Activated CD4-positive, alpha-beta T cell treated with anti-CD3 and anti-CD28 coated beads for 36 hours (primary cell): ENCODE measurements at regions of chr13 and their contacts with region 1.

Region 1: DNA sequence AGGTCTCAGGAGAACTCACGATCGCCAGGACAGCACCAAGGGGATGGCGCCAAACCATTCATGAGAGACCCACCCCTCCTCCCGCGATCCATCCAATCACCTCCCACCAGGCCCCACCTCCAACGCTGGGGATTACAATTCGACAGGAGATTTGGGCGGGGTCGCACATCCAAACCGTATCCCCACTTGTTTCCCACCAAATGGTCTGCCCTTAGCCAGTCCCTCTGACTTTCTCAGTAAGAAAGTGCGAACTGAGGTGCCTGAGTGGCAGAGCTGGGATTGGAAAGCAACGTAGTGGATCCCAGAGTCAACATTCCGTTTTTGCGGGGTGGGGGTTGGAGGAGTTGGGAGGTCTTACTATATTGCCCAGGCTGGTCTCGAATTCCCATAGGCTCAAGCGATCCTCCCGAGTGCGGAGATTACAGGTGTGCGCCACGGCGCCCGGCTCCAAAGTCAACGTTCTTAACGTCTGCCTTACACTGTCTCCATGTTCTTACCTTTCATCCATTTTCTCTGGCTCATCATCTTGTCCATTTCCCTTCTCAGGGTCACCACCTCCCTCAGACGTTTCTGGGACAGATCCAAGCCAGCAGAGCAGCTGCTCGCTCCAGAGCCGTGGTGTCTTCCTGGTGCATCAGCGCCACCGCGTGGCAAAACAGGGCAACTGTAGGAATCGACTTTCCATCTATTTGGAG is 102.7 kb upstream of the ABCC4 start:
- DNase-seq: peak; percentile 87
- ATAC-seq: peak; percentile 93
- H3K4me3 Mint-ChIP-seq: peak overlapping the region; percentile 76
- H3K27ac Mint-ChIP-seq: peak overlapping the region; percentile 75
- H3K4me1 Mint-ChIP-seq: peaks cover 8% of the 10 kb centered on the region
- H3K27me3 Mint-ChIP-seq: peaks cover 5% of the 10 kb centered on the region

Region 2: DNA sequence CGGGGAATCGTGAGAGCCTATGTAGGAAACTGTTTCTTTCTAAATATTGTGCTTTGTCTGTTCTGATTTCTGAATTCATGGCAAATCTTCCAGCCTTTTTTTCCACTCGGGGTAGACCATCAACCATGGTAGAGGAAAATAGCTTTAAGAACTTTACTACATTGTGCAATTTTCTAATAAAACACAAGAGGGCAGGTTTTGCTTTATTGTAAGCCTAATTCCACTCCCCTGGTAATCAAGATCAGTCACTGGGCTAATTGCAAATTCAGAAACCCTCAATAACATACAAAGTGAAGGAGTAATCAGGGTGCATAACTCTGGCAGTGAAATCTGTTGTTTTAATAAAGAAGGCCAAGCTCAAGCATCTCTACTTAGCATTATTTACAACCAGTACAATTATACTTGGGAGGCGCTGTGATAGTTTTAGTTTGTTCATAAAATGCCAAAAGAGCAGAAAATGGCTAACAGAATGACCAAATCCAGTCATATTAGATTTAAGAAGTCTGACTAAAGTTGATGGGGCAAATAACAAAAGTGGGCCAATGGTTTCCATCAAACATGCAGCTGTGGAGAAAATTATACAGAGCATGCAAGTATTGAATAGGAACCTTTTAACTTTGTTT is 968.3 kb before region 1 on chr13:
- CTCF ChIA-PET with region 1: no interaction called
- POLR2A ChIA-PET with region 1: no interaction called
- intact Hi-C with region 1: loop called (anchors 10 kb)
- DNase-seq: no peak
- ATAC-seq: peak; percentile 65
- H3K4me3 Mint-ChIP-seq: no peak overlapping the region
- H3K27ac Mint-ChIP-seq: no peak overlapping the region
- H3K4me1 Mint-ChIP-seq: peaks cover 33% of the 10 kb centered on the region
- H3K27me3 Mint-ChIP-seq: no peaks in the 10 kb centered on the region

Region 3: DNA sequence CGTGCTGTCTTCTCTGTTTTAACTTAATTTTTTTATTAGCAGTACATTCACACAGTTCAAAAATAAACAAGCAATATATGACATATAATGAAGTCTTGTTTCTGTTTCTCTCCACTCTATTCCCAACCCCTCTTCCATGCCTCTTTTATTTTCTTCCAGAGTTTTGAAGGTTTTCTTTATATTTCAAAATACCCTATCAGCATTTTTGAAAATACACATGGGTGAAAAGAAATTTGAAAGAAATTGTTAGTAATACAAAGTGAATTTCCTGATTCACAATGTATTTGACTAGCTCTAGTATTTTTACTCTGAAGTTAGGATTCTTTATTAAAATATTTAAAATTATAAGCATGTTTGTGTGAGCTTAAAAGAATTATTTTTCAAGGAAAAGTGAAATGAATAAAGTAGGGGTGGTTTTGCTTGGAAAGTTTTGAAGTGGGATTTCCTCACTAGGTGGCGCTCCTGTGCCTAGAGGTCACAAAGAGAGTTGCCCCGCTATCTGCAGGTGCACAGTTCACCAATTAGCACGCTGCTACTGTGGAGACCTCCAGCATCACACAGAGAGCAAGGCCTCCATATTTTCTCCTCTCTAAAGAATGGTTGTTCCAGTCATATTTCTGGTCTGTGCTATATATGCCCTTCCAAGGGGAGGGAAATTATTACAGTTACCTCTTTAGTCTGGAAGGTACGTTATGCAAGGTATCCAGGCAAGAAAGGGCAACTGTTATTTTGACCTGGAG is 729.2 kb before region 1 on chr13:
- CTCF ChIA-PET with region 1: interaction called, 8 read pairs
- POLR2A ChIA-PET with region 1: interaction called, 3 read pairs
- intact Hi-C with region 1: loop called (anchors 1 to 5 kb)
- DNase-seq: peak; percentile 80
- ATAC-seq: peak; percentile 72
- H3K4me3 Mint-ChIP-seq: no peak overlapping the region
- H3K27ac Mint-ChIP-seq: no peak overlapping the region
- H3K4me1 Mint-ChIP-seq: no peaks in the 10 kb centered on the region
- H3K27me3 Mint-ChIP-seq: peaks cover 27% of the 10 kb centered on the region

Region 4: GRCh38 chr13:95197548-95197947 is 206.4 kb before region 1 on chr13:
- CTCF ChIA-PET with region 1: interaction called, 36 read pairs
- POLR2A ChIA-PET with region 1: interaction called, 6 read pairs
- intact Hi-C with region 1: no loop called
- DNase-seq: no peak
- ATAC-seq: no peak
- H3K4me3 Mint-ChIP-seq: no peak overlapping the region
- H3K27ac Mint-ChIP-seq: no peak overlapping the region
- H3K4me1 Mint-ChIP-seq: peaks cover 2% of the 10 kb centered on the region
- H3K27me3 Mint-ChIP-seq: no peaks in the 10 kb centered on the region

Region 5: GRCh38 chr13:95378603-95379002 is 25.4 kb before region 1 on chr13:
- CTCF ChIA-PET with region 1: interaction called, 43 read pairs
- POLR2A ChIA-PET with region 1: no interaction called
- intact Hi-C with region 1: no loop called
- DNase-seq: no peak
- ATAC-seq: no peak
- H3K4me3 Mint-ChIP-seq: no peak overlapping the region
- H3K27ac Mint-ChIP-seq: no peak overlapping the region
- H3K4me1 Mint-ChIP-seq: no peaks in the 10 kb centered on the region
- H3K27me3 Mint-ChIP-seq: peaks cover 5% of the 10 kb centered on the region

Region 6: GRCh38 chr13:95420501-95420900 is 16.5 kb after region 1 on chr13:
- CTCF ChIA-PET with region 1: interaction called, 19 read pairs
- POLR2A ChIA-PET with region 1: no interaction called
- intact Hi-C with region 1: no loop called
- DNase-seq: no peak
- ATAC-seq: no peak
- H3K4me3 Mint-ChIP-seq: no peak overlapping the region
- H3K27ac Mint-ChIP-seq: no peak overlapping the region
- H3K4me1 Mint-ChIP-seq: peaks cover 2% of the 10 kb centered on the region
- H3K27me3 Mint-ChIP-seq: no peaks in the 10 kb centered on the region